ENCODE measurements at regions of chr5 and their contacts with region 1.

Region 1: GRCh38 chr5:170747851-170748250 is 35.7 kb upstream of the GABRP start:
- DNase-seq: peak; percentile 29
- H3K4me3 ChIP-seq: no peak overlapping the region
- H3K27ac ChIP-seq: no peak overlapping the region
- H3K4me1 ChIP-seq: peaks cover 6% of the 10 kb centered on the region
- H3K27me3 ChIP-seq: peaks cover 5 to 6% of the 10 kb centered on the region in 2 experiments
- CTCF ChIP-seq: peak; percentile 39 to 70
- POLR2A ChIP-seq: no peak

Region 2: DNA sequence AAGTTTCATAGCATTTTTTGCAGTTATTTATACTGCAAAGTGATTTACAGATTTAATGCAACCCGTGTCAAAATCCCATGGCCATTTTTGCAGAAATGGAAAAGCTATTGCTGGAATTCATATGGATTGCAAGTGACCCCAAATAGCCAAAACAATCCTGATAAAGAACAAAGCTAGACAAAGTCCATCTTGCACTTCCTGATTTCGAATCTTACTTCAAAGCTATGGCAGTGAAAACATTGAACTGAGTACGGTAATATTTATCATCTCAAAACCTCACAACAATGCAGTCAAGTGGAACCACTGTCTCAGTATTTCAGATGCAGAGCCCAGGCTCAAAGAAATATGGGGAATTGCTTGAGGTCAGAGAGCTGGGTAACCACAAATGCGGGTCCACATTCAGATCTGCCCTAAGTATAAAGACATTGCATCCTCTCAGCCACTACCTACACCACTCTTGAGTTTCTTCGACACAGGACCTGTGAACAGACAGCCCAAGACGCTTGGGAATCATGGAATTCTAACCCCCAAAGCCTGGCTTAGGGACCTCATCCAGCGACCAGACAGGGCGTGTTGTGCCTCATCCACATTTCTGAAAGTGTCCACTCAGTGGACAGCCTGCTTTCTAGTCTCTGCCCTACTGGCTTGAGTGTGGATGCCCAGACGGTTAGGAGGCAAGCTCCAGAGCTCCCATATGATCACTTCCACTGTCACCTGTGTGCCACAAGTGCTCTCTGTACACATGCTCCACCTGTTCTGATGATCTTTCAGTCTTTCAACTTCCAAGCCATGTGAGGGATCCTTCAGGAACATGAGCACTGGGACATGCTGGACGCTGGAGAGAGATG is 283.3 kb before region 1 on chr5:
- CTCF ChIA-PET with region 1: no interaction called
- POLR2A ChIA-PET with region 1: no interaction called
- dilution Hi-C with region 1: no loop called
- intact Hi-C with region 1: no loop called
- DNase-seq: no peak
- H3K4me3 ChIP-seq: no peak overlapping the region
- H3K27ac ChIP-seq: no peak overlapping the region
- H3K4me1 ChIP-seq: peaks cover 16% of the 10 kb centered on the region
- H3K27me3 ChIP-seq: peaks cover 0 to 3% of the 10 kb centered on the region in 2 experiments
- CTCF ChIP-seq: no peak
- POLR2A ChIP-seq: no peak

Region 3: GRCh38 chr5:170565072-170565471 is 182.8 kb before region 1 on chr5:
- CTCF ChIA-PET with region 1: no interaction called
- POLR2A ChIA-PET with region 1: no interaction called
- dilution Hi-C with region 1: no loop called
- intact Hi-C with region 1: no loop called
- DNase-seq: no peak
- H3K4me3 ChIP-seq: no peak overlapping the region
- H3K27ac ChIP-seq: no peak overlapping the region
- H3K4me1 ChIP-seq: no peaks in the 10 kb centered on the region
- H3K27me3 ChIP-seq: peaks cover 0 to 2% of the 10 kb centered on the region in 2 experiments
- CTCF ChIP-seq: no peak
- POLR2A ChIP-seq: no peak

Region 4: GRCh38 chr5:170791325-170791954 is 43.6 kb after region 1 on chr5:
- CTCF ChIA-PET with region 1: interaction called, 452 read pairs
- POLR2A ChIA-PET with region 1: interaction called, 7 read pairs
- dilution Hi-C with region 1: no loop called
- intact Hi-C with region 1: loop called (anchors 1 kb)
- DNase-seq: peak; percentile 66
- H3K4me3 ChIP-seq: no peak overlapping the region
- H3K27ac ChIP-seq: no peak overlapping the region
- H3K4me1 ChIP-seq: no peaks in the 10 kb centered on the region
- H3K27me3 ChIP-seq: no peaks in the 10 kb centered on the region
- CTCF ChIP-seq: peak; percentile 64 to 69
- POLR2A ChIP-seq: no peak

Region 5: GRCh38 chr5:170917113-170917512 is 169.3 kb after region 1 on chr5:
- CTCF ChIA-PET with region 1: interaction called, 12 read pairs
- POLR2A ChIA-PET with region 1: no interaction called
- dilution Hi-C with region 1: no loop called
- intact Hi-C with region 1: loop called (anchors 5 kb)
- DNase-seq: peak; percentile 6
- H3K4me3 ChIP-seq: no peak overlapping the region
- H3K27ac ChIP-seq: no peak overlapping the region
- H3K4me1 ChIP-seq: no peaks in the 10 kb centered on the region
- H3K27me3 ChIP-seq: no peaks in the 10 kb centered on the region
- CTCF ChIP-seq: no peak
- POLR2A ChIP-seq: no peak

Region 6: GRCh38 chr5:171162602-171163001 is 414.8 kb after region 1 on chr5:
- CTCF ChIA-PET with region 1: no interaction called
- POLR2A ChIA-PET with region 1: no interaction called
- dilution Hi-C with region 1: no loop called
- intact Hi-C with region 1: loop called (anchors 5 kb)
- DNase-seq: peak; percentile 91
- H3K4me3 ChIP-seq: no peak overlapping the region
- H3K27ac ChIP-seq: peak overlapping the region; percentile 2
- H3K4me1 ChIP-seq: peaks cover 12% of the 10 kb centered on the region
- H3K27me3 ChIP-seq: no peaks in the 10 kb centered on the region
- CTCF ChIP-seq: peak; percentile 51 to 71
- POLR2A ChIP-seq: no peak

Region 7: DNA sequence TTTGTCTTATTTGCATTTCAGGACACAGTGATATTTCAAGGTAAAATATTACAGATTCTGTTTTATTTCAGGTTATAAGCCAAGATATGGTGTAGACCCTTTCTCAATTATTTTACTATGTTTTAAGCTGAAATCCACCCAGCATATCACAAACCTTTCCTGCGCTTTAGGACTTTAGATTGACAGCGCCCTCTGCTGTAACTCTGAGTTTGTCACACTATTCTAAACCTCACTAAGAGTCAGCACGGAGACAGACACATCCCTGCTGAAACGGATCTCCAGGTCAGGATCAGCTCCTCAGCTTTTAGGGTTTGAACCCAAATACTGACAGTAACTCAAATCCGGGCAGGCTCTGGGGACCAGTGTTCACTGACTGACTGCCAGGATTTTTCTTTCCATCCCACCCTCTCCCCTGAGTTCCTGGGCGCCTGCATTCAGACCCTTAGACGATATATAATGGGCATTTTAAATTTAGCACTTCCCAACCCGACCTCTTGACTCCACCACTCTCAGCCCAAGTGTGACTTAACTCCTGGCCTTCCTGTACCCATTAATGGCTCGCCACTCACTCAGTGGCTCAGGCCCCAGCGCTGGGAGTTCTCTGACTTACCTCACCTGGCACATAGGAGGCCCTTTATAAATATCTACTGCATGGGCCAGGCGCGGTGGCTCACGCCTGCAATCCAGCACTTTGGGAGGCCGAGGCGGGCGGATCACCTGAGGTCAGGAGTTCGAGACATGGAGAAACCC is 594.7 kb after region 1 on chr5:
- CTCF ChIA-PET with region 1: interaction called, 44 read pairs
- POLR2A ChIA-PET with region 1: no interaction called
- dilution Hi-C with region 1: no loop called
- intact Hi-C with region 1: loop called (anchors 1 kb)
- DNase-seq: peak; percentile 64
- H3K4me3 ChIP-seq: no peak overlapping the region
- H3K27ac ChIP-seq: no peak overlapping the region
- H3K4me1 ChIP-seq: no peaks in the 10 kb centered on the region
- H3K27me3 ChIP-seq: no peaks in the 10 kb centered on the region
- CTCF ChIP-seq: peak; percentile 57 to 61
- POLR2A ChIP-seq: no peak

Measured in endothelial cell of umbilical vein (primary cell).